ENCODE measurements at regions of chr17 and their contacts with region 1.

Region 1: DNA sequence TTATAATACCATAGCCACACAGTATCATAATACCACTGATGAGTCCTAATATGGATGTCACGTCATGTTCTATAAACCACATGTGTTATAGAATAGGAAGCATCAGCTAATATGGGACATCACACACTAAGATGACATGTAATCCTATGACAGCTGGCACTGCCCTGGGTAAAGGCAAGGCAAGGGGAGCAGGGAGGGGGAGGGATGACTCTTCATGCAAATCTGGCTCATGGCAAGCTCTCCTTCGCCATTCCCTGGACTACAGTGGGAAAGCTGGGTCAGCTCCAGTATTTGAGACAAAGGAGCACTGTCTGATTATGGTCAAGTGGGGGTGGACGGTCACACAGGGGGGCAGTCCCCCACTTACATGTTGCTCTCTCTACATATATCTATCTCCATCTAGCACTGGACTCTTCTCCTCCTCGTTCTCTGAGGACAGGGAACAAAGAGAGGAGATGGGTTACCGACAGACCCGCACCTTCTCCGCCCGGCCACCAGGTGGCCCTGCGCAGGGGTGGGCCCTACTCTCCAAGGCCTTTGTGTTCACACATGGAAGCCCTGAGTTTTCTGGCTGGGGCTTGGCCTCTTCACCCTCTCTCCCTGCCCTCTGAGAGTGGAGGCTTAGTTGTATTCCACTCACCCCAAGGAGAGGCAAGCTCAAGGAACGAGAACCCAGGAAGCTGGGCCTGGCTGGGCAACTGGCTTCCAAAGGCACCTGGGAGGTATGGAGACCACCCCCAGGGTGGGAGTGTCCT is 23.4 kb upstream of the MPO start:
- DNase-seq: peak; percentile 92
- CTCF ChIP-seq: peak; percentile 89

Region 2: DNA sequence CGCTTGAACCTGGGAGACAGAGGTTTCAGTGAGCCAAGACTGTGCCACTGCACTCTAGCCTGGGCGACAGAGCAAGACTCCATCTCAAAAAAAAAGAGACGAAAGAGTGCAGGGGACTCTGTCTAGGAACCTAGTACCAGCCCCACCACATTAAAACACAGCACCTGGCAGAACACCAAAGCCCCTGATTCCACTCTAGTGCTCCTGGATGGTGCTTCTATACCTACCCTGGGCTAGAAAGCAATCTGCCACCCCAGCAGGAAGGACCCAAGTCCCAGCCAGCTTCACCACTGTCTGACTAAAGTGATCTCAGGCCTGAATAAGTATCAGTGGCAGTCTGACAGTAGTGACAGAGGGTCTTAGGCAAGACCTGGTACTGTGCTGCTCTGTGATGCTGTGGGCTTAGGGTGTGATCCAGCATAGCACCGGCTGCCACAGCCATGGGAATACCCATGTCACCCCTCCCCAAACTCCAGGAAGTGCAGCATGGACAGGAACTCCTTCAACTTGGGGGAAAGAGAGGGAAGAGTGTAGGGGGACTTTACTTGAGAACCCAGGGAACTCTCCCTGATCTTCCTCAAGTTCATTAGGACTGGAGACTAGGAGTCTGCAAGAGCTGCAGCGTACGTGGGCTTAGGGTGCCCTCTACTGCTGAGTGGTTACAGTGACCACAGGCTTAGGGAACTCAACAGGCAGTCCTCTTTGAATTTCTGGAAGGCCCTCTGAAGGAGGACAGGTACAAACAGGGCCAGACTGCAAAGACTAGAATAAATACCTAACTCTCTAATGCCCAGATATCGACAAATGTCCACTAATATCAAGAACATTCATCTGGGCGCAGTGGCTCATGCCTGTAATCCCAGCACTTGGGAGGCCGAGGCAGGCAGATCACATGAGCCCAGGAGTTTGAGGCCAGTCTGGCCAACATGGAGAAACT is 143.2 kb after region 1 on chr17:
- in situ Hi-C with region 1: loop called (anchors 10 kb)
- DNase-seq: peak; percentile 67
- CTCF ChIP-seq: peak; percentile 86

Region 3: DNA sequence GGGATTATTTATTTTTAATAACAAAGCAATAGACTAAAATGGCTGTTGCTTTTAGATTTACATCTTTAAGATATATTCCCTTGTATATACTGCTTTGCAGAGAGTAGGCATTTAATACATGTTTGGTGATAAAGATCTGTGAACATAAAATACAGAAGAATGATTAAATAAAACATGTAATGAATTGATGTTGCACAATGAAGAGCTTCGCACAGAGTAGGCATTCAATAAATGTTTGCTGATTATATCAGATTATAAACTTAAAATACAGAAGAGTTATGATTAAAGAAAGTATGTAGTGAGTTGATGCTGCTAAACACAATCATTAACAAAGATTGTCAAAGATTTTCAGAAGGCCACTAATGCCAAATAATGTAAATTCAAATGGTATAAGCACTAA is 159.7 kb after region 1 on chr17:
- in situ Hi-C with region 1: no loop called
- DNase-seq: no peak
- CTCF ChIP-seq: no peak

Measured in GM13977 (cell line).